Aorta (tissue), 5 donors: ENCODE measurements at regions of chr19 and their contacts with region 1.

Region 1: GRCh38 chr19:47035127-47036096 is 13.0 kb downstream of the TMEM160 start:
- DNase-seq: peak; percentile 87 to 96
- ATAC-seq: peak; percentile 94
- H3K4me3 ChIP-seq: peak overlapping the region in 1 of 2 donors; percentile 28
- H3K27ac ChIP-seq: no peak overlapping the region
- H3K4me1 ChIP-seq: no peaks in the 10 kb centered on the region
- H3K27me3 ChIP-seq: no peaks in the 10 kb centered on the region

Region 2: GRCh38 chr19:46932346-46932745 is 103.1 kb before region 1 on chr19:
- intact Hi-C with region 1: no loop called
- DNase-seq: no peak
- ATAC-seq: no peak
- H3K4me3 ChIP-seq: no peak overlapping the region
- H3K27ac ChIP-seq: peak overlapping the region in 1 of 2 donors; percentile 57
- H3K4me1 ChIP-seq: peaks cover 8 to 15% of the 10 kb centered on the region in 2 donors
- H3K27me3 ChIP-seq: no peaks in the 10 kb centered on the region

Region 3: DNA sequence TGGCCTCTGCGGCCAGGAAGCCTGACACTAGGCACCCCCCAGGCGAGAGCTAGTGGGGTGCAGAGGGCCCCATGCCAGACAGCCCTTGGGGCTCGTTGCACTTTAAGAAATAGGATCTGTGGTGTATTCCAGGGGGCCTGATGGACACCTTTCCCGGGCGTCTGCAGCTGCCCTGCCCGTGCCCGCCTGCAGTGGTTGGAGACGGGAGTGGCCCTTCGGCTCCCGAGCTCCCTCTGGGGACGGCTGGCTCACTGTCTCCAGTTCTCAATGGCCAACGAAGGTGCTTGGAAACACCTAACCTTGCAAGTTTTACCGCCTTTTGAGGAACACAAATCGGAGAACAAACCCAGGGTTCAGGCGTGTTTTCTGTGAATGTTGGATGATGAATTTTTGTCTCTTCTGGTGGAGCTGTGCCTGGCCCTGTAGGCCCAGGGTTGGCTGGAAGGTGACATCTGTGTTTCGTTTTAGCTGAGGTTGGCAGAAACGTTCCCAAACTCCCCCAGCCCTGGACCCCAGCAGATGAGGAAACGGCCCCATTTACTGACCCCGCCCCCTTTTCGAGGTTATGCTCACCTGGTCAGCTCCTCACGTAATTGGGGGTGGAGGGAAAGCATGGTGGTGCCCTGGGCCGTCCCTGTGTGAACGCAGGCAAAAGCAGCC is 33.2 kb before region 1 on chr19:
- intact Hi-C with region 1: no loop called
- DNase-seq: no peak
- ATAC-seq: no peak
- H3K4me3 ChIP-seq: no peak overlapping the region
- H3K27ac ChIP-seq: no peak overlapping the region
- H3K4me1 ChIP-seq: no peaks in the 10 kb centered on the region
- H3K27me3 ChIP-seq: no peaks in the 10 kb centered on the region

Region 4: DNA sequence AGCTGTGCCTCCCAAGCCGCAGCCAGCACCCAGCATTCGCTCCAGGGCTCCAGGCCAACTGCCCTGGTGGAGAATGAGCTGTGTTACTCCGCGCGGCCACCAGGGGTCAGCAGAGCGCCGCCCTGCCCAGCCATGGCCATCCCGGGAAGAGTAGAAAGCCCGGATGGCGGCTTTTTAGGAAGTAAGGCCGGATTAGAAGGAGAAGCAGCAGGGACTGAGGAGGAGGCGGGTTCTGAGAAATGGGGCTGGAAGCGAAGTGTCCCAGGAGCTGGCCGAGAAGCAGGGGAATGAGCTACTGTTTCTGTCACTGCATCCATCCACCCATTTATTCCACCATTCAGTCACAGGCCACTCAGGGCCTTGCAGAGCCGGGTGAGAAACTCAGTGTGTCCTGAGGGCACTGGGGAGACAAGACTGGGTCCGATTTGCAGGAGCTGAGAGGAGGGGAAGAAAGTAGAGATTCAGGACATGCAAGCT is 22.3 kb before region 1 on chr19:
- intact Hi-C with region 1: loop called in 1 of 2 experiments (anchors 2 kb)
- DNase-seq: peak; percentile 80 to 94
- ATAC-seq: peak; percentile 97
- H3K4me3 ChIP-seq: no peak overlapping the region
- H3K27ac ChIP-seq: no peak overlapping the region
- H3K4me1 ChIP-seq: no peaks in the 10 kb centered on the region
- H3K27me3 ChIP-seq: no peaks in the 10 kb centered on the region

Region 5: GRCh38 chr19:47124937-47125668 is 89.7 kb after region 1 on chr19:
- intact Hi-C with region 1: loop called in 1 of 2 experiments (anchors 1 kb)
- DNase-seq: peak in 1 of 2 donors; percentile 6
- ATAC-seq: peak; percentile 78
- H3K4me3 ChIP-seq: no peak overlapping the region
- H3K27ac ChIP-seq: no peak overlapping the region
- H3K4me1 ChIP-seq: no peaks in the 10 kb centered on the region
- H3K27me3 ChIP-seq: no peaks in the 10 kb centered on the region